Mammary epithelial cell (primary cell): ENCODE measurements at regions of chr10 and their contacts with region 1.

Region 1: GRCh38 chr10:68647672-68648341 is 73.2 kb upstream of the CCAR1 start:
- DNase-seq: peak; percentile 76
- H3K4me3 ChIP-seq: no peak overlapping the region
- H3K27ac ChIP-seq: peak overlapping the region; percentile 67
- H3K4me1 ChIP-seq: peaks cover 11% of the 10 kb centered on the region
- H3K27me3 ChIP-seq: no peaks in the 10 kb centered on the region
- CTCF ChIP-seq: no peak

Region 2: DNA sequence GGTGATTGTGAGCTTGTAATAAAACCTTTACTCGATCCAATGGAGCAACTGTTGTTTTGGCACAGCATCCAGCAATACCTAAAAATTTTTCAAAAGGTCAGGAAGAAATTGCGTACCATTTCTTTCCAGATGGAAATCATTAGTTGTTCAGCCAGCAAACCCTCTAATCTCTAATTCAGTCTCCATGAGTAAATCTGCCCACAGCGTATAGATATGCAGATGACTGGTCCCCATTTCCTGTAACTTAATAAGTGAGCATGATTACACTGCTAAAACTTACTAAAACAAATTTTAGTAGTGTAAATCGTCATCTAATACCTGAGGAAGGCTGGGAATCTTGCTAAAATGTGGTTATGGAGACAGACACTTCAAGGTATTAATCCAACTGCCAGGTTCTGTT is 131.0 kb before region 1 on chr10:
- CTCF ChIA-PET with region 1: no interaction called
- dilution Hi-C with region 1: no loop called
- in situ Hi-C with region 1: no loop called
- intact Hi-C with region 1: no loop called
- DNase-seq: no peak
- H3K4me3 ChIP-seq: no peak overlapping the region
- H3K27ac ChIP-seq: peak overlapping the region; percentile 44
- H3K4me1 ChIP-seq: peaks cover 9% of the 10 kb centered on the region
- H3K27me3 ChIP-seq: no peaks in the 10 kb centered on the region
- CTCF ChIP-seq: no peak

Region 3: DNA sequence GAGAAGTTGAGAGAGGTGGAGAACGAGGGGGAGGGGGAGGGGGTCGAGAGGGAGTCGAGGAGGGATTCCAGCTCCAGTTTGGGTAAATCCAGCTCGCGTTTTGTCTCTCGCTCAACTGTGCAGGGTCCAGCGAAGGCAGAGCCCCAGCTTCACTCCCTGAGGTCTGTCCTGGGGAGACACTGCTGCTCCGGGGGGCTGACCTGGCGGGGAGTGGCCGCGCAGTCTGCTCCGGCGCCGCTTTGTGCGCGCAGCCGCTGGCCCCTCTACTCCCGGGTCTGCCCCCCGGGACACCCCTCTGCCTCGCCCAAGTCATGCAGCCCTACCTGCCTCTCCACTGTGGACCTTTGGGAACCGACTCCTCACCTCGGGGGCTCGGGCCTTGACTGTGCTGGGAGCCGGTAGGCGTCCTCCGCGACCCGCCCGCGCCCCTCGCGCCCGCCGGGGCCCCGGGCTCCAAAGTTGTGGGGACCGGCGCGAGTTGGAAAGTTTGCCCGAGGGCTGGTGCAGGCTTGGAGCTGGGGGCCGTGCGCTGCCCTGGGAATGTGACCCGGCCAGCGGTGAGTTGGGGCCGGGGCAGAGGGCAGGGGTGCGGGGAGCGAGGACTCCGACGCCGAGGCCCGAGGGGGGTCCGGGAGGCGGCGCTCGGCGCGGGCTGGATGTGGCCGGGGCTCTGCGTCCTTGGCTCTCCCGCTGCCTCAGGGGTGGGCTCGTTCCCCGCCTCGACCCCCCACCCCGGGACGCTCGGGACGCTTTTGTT is 87.4 kb before region 1 on chr10 and contains the start of gene TET1:
- CTCF ChIA-PET with region 1: no interaction called
- dilution Hi-C with region 1: no loop called
- in situ Hi-C with region 1: no loop called
- intact Hi-C with region 1: no loop called
- DNase-seq: peak; percentile 35
- H3K4me3 ChIP-seq: peak within 1 kb of the TSS; percentile 50 to 59 (median 59)
- H3K27ac ChIP-seq: no peak within 1 kb of the TSS
- H3K4me1 ChIP-seq: peaks cover 6% of the 10 kb centered on the region
- H3K27me3 ChIP-seq: no peaks in the 10 kb centered on the region
- CTCF ChIP-seq: no peak
- total RNA-seq, gene TET1: 0.75 to 1.8 TPM

Region 4: GRCh38 chr10:68684413-68684812 is 36.6 kb after region 1 on chr10:
- CTCF ChIA-PET with region 1: no interaction called
- dilution Hi-C with region 1: loop called (anchors 5 kb)
- in situ Hi-C with region 1: no loop called
- intact Hi-C with region 1: no loop called
- DNase-seq: no peak
- H3K4me3 ChIP-seq: no peak overlapping the region
- H3K27ac ChIP-seq: no peak overlapping the region
- H3K4me1 ChIP-seq: no peaks in the 10 kb centered on the region
- H3K27me3 ChIP-seq: no peaks in the 10 kb centered on the region
- CTCF ChIP-seq: no peak